Ascending aorta (tissue), 2 donors: ENCODE measurements at regions of chrX and their contacts with region 1.

Region 1: GRCh38 chrX:109485470-109486340 is 3.8 kb upstream of the GUCY2F start:
- DNase-seq: peak; percentile 10 to 83
- H3K4me3 ChIP-seq: no peak overlapping the region
- H3K27ac ChIP-seq: no peak overlapping the region
- H3K4me1 ChIP-seq: no peaks in the 10 kb centered on the region
- H3K27me3 ChIP-seq: no peaks in the 10 kb centered on the region
- CTCF ChIP-seq: peak; percentile 82 to 98 (median 91)

Region 2: GRCh38 chrX:109632906-109633504 is 147.3 kb after region 1 on chrX:
- intact Hi-C with region 1: loop called (anchors 2 kb)
- DNase-seq: no peak
- H3K4me3 ChIP-seq: no peak overlapping the region
- H3K27ac ChIP-seq: no peak overlapping the region
- H3K4me1 ChIP-seq: no peaks in the 10 kb centered on the region
- H3K27me3 ChIP-seq: no peaks in the 10 kb centered on the region
- CTCF ChIP-seq: peak in 1 of 3 experiments; percentile 37

Region 3: DNA sequence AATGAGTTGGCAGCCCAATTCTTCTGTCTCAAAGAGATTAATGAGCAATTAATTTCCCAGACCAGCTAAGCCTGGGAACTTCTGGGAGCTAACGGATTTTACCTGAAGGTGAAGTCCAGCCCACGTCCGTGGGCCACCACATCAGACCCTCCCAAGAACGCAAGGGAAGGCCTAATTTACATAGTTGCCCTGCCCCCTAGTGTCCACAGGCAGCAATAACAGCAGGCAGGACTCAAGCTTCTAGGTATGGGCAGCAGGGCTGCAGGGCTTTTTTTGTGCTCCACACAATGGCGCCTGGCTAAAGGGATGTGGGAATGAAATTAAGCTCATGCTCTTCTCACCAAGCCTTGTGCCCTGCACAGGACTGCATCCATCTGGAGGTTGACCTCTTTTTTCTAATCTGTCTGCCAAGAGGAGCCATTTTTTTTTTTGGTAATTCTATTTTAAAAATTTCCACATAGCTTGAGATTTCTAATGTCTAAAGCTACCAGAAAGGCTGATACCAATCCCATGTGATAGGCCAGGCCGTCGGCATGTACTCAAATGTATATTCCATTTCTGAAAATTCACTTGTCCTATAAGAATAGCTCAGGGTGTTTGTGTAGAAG is 405.3 kb after region 1 on chrX:
- intact Hi-C with region 1: loop called (anchors 2 kb)
- DNase-seq: peak in 1 of 2 donors; percentile 70
- H3K4me3 ChIP-seq: no peak overlapping the region
- H3K27ac ChIP-seq: no peak overlapping the region
- H3K4me1 ChIP-seq: no peaks in the 10 kb centered on the region
- H3K27me3 ChIP-seq: no peaks in the 10 kb centered on the region
- CTCF ChIP-seq: peak; percentile 47 to 85 (median 84)